ENCODE measurements at regions of chr11 and their contacts with region 1.

Region 1: GRCh38 chr11:104343578-104343977 is 179.6 kb upstream of the PDGFD start:
- DNase-seq: peak; percentile 31
- ATAC-seq: peak; percentile 78
- H3K4me3 ChIP-seq: no peak overlapping the region
- H3K27ac ChIP-seq: no peak overlapping the region
- H3K4me1 ChIP-seq: no peaks in the 10 kb centered on the region
- H3K27me3 ChIP-seq: no peaks in the 10 kb centered on the region
- CTCF ChIP-seq: peak in 2 of 3 experiments; percentile 36 to 48; a peak in 3 of 6 replicates
- POLR2A ChIP-seq: no peak
- RAD21 ChIP-seq: 0 out of 2 replicates have a peak, but pooled peaks have one; percentile 2

Region 2: DNA sequence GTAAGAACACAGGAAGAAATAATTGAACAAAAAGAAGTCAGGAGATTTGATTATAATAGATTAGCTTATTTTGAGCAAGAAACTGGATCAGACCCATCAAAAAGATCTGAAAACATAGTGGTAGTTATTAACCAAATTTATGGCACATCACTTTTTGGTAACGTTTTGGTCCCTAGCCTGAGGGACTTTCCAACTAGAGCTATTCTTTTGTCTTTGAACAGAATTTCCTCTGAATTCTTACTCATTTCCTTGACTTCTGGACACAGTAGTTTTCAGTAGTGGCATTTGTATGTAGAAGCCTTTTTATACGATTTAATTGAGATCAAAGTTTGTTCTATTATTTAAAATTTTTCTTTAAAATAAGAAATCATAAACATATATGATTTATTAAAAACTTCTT is 83.1 kb before region 1 on chr11:
- CTCF ChIA-PET with region 1: no interaction called
- POLR2A ChIA-PET with region 1: no interaction called
- RAD21 ChIA-PET with region 1: no interaction called
- intact Hi-C with region 1: no loop called
- DNase-seq: no peak
- ATAC-seq: no peak
- H3K4me3 ChIP-seq: no peak overlapping the region
- H3K27ac ChIP-seq: no peak overlapping the region
- H3K4me1 ChIP-seq: no peaks in the 10 kb centered on the region
- H3K27me3 ChIP-seq: no peaks in the 10 kb centered on the region
- CTCF ChIP-seq: no peak
- POLR2A ChIP-seq: no peak
- RAD21 ChIP-seq: no peak

Region 3: GRCh38 chr11:104279587-104279986 is 64.0 kb before region 1 on chr11:
- CTCF ChIA-PET with region 1: no interaction called
- POLR2A ChIA-PET with region 1: no interaction called
- RAD21 ChIA-PET with region 1: no interaction called
- intact Hi-C with region 1: no loop called
- DNase-seq: no peak
- ATAC-seq: no peak
- H3K4me3 ChIP-seq: no peak overlapping the region
- H3K27ac ChIP-seq: no peak overlapping the region
- H3K4me1 ChIP-seq: no peaks in the 10 kb centered on the region
- H3K27me3 ChIP-seq: no peaks in the 10 kb centered on the region
- CTCF ChIP-seq: no peak
- POLR2A ChIP-seq: no peak
- RAD21 ChIP-seq: no peak

Region 4: GRCh38 chr11:104291630-104292029 is 51.9 kb before region 1 on chr11:
- CTCF ChIA-PET with region 1: no interaction called
- POLR2A ChIA-PET with region 1: no interaction called
- RAD21 ChIA-PET with region 1: no interaction called
- intact Hi-C with region 1: loop called (anchors 5 kb)
- DNase-seq: no peak
- ATAC-seq: no peak
- H3K4me3 ChIP-seq: no peak overlapping the region
- H3K27ac ChIP-seq: no peak overlapping the region
- H3K4me1 ChIP-seq: no peaks in the 10 kb centered on the region
- H3K27me3 ChIP-seq: no peaks in the 10 kb centered on the region
- CTCF ChIP-seq: no peak
- POLR2A ChIP-seq: no peak
- RAD21 ChIP-seq: no peak

Region 5: DNA sequence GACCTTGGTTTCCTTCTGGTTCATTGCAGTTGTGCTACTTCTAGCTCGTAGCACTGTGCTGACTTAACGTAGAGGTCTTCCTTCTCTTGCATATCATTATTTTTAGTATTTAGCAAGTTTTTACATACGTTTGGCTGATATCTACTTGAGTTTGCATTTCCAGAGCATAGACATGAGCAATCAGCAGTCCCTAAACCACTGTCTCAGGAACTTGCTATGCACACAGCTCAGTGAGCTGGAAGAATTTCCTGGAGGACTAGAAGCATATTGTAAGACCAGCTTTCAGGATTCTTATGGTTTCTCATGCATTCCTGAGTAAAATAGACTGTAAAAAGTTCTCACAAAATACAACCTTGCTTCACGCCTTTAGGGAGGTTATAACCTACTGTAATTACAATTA is 47.1 kb after region 1 on chr11:
- CTCF ChIA-PET with region 1: no interaction called
- POLR2A ChIA-PET with region 1: no interaction called
- RAD21 ChIA-PET with region 1: no interaction called
- intact Hi-C with region 1: no loop called
- DNase-seq: no peak
- ATAC-seq: no peak
- H3K4me3 ChIP-seq: no peak overlapping the region
- H3K27ac ChIP-seq: no peak overlapping the region
- H3K4me1 ChIP-seq: no peaks in the 10 kb centered on the region
- H3K27me3 ChIP-seq: no peaks in the 10 kb centered on the region
- CTCF ChIP-seq: no peak
- POLR2A ChIP-seq: no peak
- RAD21 ChIP-seq: no peak